HEK293 (cell line): ENCODE measurements at regions of chr1 and their contacts with region 1.

Region 1: DNA sequence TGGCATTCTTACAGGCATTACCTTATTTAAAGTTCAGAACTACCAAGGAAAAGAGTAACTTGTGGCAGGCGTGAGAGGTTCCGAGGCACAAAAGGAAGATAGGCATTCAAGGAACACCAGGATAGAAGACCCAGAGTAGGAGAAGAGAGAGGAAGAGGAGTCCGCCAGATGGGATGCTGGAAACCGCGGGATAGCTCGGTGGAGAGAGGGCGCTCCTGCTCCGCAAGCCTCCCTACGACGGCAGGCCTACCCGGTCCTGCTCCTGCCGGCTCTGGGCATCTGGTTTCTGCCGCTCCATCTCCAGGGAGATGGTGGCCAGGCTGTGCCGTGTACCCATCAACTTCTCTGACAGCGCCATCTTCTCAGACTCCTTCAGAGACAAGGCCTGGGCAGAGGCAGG is 5.4 kb upstream of the NBPF1 start:
- H3K4me3 ChIP-seq: no peak overlapping the region
- H3K27ac ChIP-seq: no peak overlapping the region
- H3K4me1 ChIP-seq: peaks cover 6% of the 10 kb centered on the region
- CTCF ChIP-seq: no peak

Region 2: GRCh38 chr1:16607433-16607851 is 11.3 kb before region 1 on chr1:
- CTCF ChIA-PET with region 1: interaction called, 29 read pairs
- POLR2A ChIA-PET with region 1: interaction called, 12 read pairs
- H3K4me3 ChIP-seq: no peak overlapping the region
- H3K27ac ChIP-seq: no peak overlapping the region
- H3K4me1 ChIP-seq: peaks cover 10% of the 10 kb centered on the region
- CTCF ChIP-seq: no peak

Region 3: DNA sequence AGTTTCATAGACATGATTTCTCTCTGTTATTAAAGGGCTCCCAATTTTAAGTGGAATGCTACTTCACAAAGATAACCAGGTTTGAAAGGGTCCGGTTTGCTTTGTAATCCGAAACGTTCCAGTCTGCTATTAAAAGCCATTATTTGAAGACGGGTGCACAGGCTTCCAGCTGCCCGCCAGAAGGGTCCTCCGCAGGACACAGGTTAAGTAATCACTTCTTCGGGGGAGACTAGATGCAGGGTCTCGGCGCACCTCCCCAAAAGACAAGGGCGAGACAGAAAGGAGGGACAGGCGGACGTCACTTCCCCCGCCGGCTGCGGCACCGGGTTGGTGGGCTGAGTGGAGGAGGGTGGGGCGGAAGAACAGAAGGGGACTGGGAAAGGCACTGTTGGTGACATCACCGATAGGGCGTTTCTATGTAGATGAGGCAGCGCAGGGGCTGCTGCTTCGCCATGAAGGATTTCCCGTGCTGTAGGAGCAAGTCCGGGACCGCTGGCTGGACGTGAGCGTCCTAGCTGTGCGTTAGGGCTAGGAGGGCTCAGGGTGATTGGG is 285.9 kb after region 1 on chr1:
- CTCF ChIA-PET with region 1: interaction called, 14 read pairs
- POLR2A ChIA-PET with region 1: interaction called, 12 read pairs
- H3K4me3 ChIP-seq: peak overlapping the region; percentile 48
- H3K27ac ChIP-seq: peak overlapping the region; percentile 97
- H3K4me1 ChIP-seq: no peaks in the 10 kb centered on the region
- CTCF ChIP-seq: no peak

Region 4: DNA sequence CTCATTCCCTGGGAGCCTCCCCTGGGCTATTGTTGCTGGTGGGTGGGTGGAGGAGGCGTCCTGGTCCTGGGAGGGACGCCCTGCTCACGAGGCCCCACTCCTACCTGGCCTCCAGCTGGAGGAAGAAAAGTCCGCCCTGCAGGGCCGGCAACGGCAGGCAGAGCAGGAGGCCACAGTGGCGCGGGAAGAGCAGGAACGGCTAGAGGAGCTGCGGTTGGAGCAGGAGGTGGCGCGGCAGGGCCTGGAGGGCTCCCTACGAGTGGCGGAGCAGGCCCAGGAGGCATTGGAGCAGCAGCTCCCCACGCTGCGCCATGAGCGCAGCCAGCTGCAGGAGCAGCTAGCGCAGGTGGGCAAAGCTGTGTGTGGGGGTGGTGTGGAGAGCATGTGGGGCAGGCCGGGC is 327.9 kb after region 1 on chr1:
- CTCF ChIA-PET with region 1: interaction called, 12 read pairs
- POLR2A ChIA-PET with region 1: no interaction called
- H3K4me3 ChIP-seq: no peak overlapping the region
- H3K27ac ChIP-seq: no peak overlapping the region
- H3K4me1 ChIP-seq: no peaks in the 10 kb centered on the region
- CTCF ChIP-seq: no peak